Astrocyte of the cerebellum (primary cell): ENCODE measurements at regions of chr4 and their contacts with region 1.

Region 1: DNA sequence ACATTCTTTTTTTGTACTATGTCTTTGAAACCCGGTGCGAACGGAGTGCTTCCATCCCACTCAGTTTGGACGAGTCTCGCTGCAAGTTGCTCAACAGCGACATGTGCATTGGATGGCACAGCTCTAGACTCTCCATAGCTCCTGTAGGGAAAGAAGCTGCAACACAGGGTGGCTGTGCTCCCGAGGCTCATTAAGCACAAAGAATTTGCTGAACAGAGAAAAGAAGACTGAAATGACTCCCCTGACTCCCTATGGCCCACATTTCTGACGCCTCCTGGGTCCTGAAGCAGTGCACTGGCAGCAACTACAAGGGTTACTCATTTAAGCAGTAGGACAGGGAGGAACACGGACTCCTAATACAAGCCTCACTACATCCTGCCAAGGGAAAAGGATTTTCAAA is 127.4 kb downstream of the SH3RF1 start:
- DNase-seq: no peak
- H3K4me3 ChIP-seq: no peak overlapping the region
- CTCF ChIP-seq: no peak

Region 2: DNA sequence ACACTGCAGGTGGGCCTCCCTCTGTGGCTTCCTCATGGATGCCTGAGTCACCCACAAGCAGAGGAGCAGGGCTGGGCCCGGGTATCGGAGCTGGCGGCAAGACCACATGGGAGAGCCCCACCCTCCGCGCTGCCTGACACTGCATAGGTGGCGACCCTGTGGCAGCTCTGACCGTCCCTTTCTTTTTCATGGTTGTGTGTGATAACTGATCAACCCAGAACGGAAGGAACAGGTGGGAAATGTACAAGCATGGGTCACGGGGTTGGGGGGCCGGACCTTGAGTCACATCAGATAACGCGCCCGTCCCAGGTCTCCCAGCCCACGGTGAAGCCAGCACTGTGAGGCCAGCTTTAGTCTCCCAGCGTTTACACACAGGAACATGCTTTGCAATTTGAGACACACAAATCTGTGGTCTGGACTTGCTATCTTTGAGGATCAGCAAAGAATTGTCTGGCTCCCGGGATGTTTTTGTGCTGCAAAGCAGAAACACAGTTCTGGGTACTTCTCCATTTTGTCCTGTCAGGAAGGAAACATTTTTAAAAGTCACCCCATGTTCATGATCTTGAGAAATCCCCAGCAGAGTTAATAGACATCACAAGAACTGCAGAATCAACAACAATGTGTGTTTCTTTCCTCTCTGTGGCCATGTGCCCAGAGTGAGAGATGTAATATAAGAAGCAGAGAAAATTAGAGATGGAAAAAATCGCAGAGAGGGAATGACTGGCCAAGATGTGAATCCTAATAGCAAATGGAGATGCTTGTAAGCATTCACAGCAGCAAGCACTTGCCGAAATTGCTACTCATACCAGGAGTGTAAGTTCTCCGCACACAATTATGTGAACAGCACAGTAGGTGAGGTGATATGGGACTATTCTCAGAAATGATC is 63.1 kb before region 1 on chr4:
- in situ Hi-C with region 1: loop called (anchors 5 kb)
- DNase-seq: peak; percentile 82
- H3K4me3 ChIP-seq: no peak overlapping the region
- CTCF ChIP-seq: no peak